T-cell (primary cell): ENCODE measurements at regions of chr9 and their contacts with region 1.

Region 1: DNA sequence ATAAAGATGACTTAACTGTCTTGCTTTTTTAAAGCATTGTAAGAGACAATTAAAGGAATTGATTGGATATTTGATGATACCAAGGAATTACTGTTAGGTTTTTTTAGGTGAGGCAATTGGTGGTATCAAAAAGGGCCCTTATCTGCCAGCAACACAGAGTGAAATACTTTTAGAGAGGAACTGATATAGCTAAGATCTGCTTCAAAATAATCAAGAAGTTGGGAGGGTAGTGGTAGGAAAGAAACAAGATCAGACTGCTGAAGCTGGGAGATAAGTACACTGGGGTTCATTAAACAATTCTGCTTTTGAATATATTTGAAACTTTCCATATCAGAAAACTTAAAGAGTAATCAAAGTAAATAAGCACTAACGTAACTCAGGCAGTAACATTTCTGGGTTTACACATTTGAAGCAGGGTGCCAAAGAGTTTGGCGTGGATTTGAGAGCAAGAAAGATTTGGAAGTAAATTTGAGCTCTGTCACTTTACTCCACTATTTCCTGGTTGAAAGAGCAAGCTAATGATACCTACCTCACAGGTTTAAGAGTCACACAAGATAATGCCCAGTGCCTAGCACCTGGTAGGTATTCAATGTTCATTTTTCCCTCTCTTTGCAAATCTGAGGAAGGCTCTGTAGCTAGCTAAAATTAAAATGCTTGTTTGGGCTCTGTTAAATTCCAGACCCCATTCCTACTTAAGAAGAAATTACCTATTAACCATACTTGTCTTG is 6.9 kb downstream of the ERMP1 start:
- DNase-seq: no peak
- ATAC-seq: no peak
- H3K4me3 ChIP-seq: no peak overlapping the region
- H3K4me3 Mint-ChIP-seq: no peak overlapping the region
- H3K27ac ChIP-seq: no peak overlapping the region
- H3K27ac Mint-ChIP-seq: peak overlapping the region; percentile 10 to 70
- H3K4me1 ChIP-seq: peaks cover under 1 to 5% of the 10 kb centered on the region in 2 experiments
- H3K4me1 Mint-ChIP-seq: peaks cover 27 to 46% (median 41%) of the 10 kb centered on the region in 3 donors
- H3K27me3 ChIP-seq: no peaks in the 10 kb centered on the region
- H3K27me3 Mint-ChIP-seq: no peaks in the 10 kb centered on the region

Region 2: DNA sequence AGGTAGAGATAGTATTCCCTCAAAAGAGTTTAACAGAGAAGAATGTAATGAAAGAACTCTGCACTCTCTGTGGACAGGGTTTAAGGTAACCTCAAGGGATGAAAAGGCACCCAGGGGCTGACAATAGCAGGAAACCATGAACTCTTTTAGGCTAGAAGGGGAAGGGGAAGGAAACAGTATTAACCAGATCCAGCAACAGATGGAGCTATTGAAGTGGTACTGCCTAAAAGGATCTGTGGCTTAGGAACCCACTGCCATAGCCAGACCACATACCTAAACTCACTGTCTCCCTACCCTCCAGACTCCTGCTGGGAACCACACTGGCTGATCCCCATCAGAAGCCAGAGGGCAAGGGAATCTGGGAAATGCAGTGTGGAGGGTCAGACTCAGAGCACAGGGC is 423.8 kb before region 1 on chr9:
- CTCF ChIA-PET with region 1: interaction called in 1 of 2 experiments, 11 read pairs
- POLR2A ChIA-PET with region 1: no interaction called
- DNase-seq: no peak
- ATAC-seq: no peak
- H3K4me3 ChIP-seq: no peak overlapping the region
- H3K4me3 Mint-ChIP-seq: peak overlapping the region in 1 of 3 donors; percentile 2
- H3K27ac ChIP-seq: no peak overlapping the region
- H3K27ac Mint-ChIP-seq: no peak overlapping the region
- H3K4me1 ChIP-seq: peaks cover 3 to 4% of the 10 kb centered on the region in 2 experiments
- H3K4me1 Mint-ChIP-seq: peaks cover 22 to 46% (median 25%) of the 10 kb centered on the region in 3 donors
- H3K27me3 ChIP-seq: no peaks in the 10 kb centered on the region
- H3K27me3 Mint-ChIP-seq: no peaks in the 10 kb centered on the region

Region 3: DNA sequence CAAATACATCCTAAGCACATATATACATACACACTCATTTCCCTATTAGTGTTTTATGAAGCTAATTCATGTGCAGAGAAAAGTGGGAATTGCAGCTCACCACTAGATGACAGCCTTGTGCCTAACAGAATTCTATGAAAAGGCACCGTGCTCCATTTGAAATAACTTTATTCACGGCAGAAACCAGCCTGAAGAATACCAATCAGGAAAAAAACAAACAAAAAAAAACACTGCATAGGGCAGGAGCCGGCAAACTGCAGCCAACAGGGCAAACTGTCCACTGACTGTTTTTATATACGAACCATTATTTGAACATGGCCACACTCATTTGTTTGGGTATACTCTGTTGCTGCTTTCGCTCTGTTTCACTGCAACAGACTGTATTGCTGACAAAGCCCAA is 26.7 kb before region 1 on chr9:
- CTCF ChIA-PET with region 1: no interaction called
- POLR2A ChIA-PET with region 1: no interaction called
- DNase-seq: peak in 3 of 35 experiments; percentile 4 to 44 (median 8)
- ATAC-seq: no peak
- H3K4me3 ChIP-seq: no peak overlapping the region
- H3K4me3 Mint-ChIP-seq: no peak overlapping the region
- H3K27ac ChIP-seq: no peak overlapping the region
- H3K27ac Mint-ChIP-seq: peak overlapping the region in 1 of 2 donors; percentile 61
- H3K4me1 ChIP-seq: no peaks in the 10 kb centered on the region
- H3K4me1 Mint-ChIP-seq: peaks cover 11 to 26% (median 24%) of the 10 kb centered on the region in 3 donors
- H3K27me3 ChIP-seq: no peaks in the 10 kb centered on the region
- H3K27me3 Mint-ChIP-seq: no peaks in the 10 kb centered on the region

Region 4: GRCh38 chr9:5976674-5977397 is 150.8 kb after region 1 on chr9:
- CTCF ChIA-PET with region 1: no interaction called
- POLR2A ChIA-PET with region 1: no interaction called
- DNase-seq: no peak
- ATAC-seq: no peak
- H3K4me3 ChIP-seq: no peak overlapping the region
- H3K4me3 Mint-ChIP-seq: no peak overlapping the region
- H3K27ac ChIP-seq: no peak overlapping the region
- H3K27ac Mint-ChIP-seq: peak overlapping the region; percentile 50
- H3K4me1 ChIP-seq: no peaks in the 10 kb centered on the region
- H3K4me1 Mint-ChIP-seq: peaks cover 34 to 41% (median 39%) of the 10 kb centered on the region in 3 donors
- H3K27me3 ChIP-seq: no peaks in the 10 kb centered on the region
- H3K27me3 Mint-ChIP-seq: no peaks in the 10 kb centered on the region